Mammary epithelial cell (primary cell): ENCODE measurements at regions of chr1 and their contacts with region 1.

Region 1: DNA sequence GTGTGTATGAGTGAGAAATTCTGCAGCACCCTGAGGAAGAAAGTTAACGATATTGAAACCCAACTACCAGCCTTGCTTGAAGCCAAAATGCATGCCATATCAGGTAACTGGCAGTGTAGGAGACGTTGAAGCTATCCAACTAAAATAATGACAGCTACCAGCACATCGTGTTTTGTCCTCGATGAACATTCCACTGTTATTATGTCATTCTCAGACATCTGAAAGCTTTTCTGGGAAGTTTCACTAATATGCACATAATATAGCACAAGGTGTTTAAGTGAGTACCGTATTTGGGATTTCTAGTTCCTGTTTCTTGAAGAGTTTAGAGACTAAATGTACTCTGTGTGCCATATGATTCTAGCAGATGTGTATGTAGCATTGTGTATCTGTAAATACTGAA is 173.5 kb downstream of the DISC1 start:
- DNase-seq: peak; percentile 66
- H3K4me3 ChIP-seq: no peak overlapping the region
- H3K27ac ChIP-seq: no peak overlapping the region
- H3K4me1 ChIP-seq: peaks cover 3% of the 10 kb centered on the region
- H3K27me3 ChIP-seq: no peaks in the 10 kb centered on the region
- CTCF ChIP-seq: no peak

Region 2: GRCh38 chr1:232562855-232563510 is 762.9 kb after region 1 on chr1:
- CTCF ChIA-PET with region 1: interaction called, 10 read pairs
- dilution Hi-C with region 1: no loop called
- in situ Hi-C with region 1: no loop called
- intact Hi-C with region 1: no loop called
- DNase-seq: no peak
- H3K4me3 ChIP-seq: no peak overlapping the region
- H3K27ac ChIP-seq: no peak overlapping the region
- H3K4me1 ChIP-seq: no peaks in the 10 kb centered on the region
- H3K27me3 ChIP-seq: no peaks in the 10 kb centered on the region
- CTCF ChIP-seq: no peak